A549 (cell line): ENCODE measurements at regions of chr1 and their contacts with region 1.

Region 1: DNA sequence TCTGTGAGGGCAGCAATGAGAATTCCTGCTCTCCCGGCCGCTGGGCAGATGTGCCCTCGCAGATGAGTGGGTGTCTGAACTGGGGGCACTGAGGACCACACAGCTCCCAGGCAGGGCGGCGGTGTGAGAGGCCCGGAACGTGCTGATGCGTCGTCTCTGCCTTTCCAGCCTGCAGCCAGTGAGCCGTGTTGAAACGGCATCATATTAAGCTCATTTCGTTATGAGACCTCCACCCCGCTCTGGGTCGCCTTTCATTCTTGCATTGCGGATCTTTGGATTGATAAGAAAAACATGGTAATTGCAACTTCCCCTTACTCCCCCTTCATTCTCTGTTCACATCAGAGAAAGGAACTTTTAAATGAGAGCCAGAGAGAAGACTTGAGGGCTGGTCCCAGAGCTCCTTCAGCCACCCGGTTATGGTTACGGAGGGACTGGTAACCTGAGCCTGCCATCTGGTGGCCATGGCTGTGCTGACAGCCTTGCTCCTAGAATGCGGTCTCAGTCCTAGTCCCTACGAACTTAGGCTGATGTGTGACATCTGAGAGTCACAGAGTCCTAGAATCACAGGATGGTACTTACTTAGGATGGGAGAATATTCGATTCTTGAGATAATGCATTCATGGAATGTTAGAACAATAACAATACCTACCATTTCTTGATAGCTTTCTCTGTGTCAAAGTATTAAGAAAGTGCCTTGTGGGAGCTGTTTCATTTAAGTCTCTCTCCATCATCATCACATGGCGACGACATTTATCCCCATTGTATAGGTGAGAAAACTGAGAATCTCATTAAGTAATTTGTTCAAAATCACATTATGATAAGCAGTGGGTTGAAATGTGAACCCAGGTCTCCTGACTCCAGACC is 271.0 kb downstream of the TRABD2B start:
- DNase-seq: peak; percentile 74 to 82
- ATAC-seq: peak; percentile 91 to 94
- H3K4me3 ChIP-seq: no peak overlapping the region
- H3K27ac ChIP-seq: no peak overlapping the region
- H3K4me1 ChIP-seq: peaks cover 22% of the 10 kb centered on the region; the same call in 2 of the 3 replicates
- CTCF ChIP-seq: peak; percentile 76
- EP300 ChIP-seq: no peak
- POLR2A ChIP-seq: no peak
- RAD21 ChIP-seq: peak; percentile 76 to 81

Region 2: GRCh38 chr1:47388891-47389238 is 337.4 kb before region 1 on chr1:
- CTCF ChIA-PET with region 1: interaction called, 34 read pairs
- POLR2A ChIA-PET with region 1: no interaction called
- DNase-seq: peak; percentile 53 to 60
- ATAC-seq: peak; percentile 94 to 96
- H3K4me3 ChIP-seq: no peak overlapping the region
- H3K27ac ChIP-seq: no peak overlapping the region
- H3K4me1 ChIP-seq: no peaks in the 10 kb centered on the region
- CTCF ChIP-seq: peak; percentile 63
- EP300 ChIP-seq: no peak
- POLR2A ChIP-seq: no peak
- RAD21 ChIP-seq: peak; percentile 70 to 74

Region 3: GRCh38 chr1:47416319-47417169 is 309.7 kb before region 1 on chr1:
- CTCF ChIA-PET with region 1: interaction called, 10 read pairs
- POLR2A ChIA-PET with region 1: no interaction called
- DNase-seq: no peak
- ATAC-seq: peak; percentile 30 to 59; a peak in 3 of 6 replicates
- H3K4me3 ChIP-seq: peak overlapping the region; percentile 38
- H3K27ac ChIP-seq: peak overlapping the region in 1 of 2 experiments; percentile 62; a peak in 3 of 6 replicates
- H3K4me1 ChIP-seq: no peaks in the 10 kb centered on the region
- CTCF ChIP-seq: no peak
- EP300 ChIP-seq: no peak
- POLR2A ChIP-seq: no peak
- RAD21 ChIP-seq: no peak

Region 4: GRCh38 chr1:47424336-47424982 is 301.8 kb before region 1 on chr1:
- CTCF ChIA-PET with region 1: interaction called, 313 read pairs
- POLR2A ChIA-PET with region 1: no interaction called
- DNase-seq: peak; percentile 63 to 65
- ATAC-seq: peak; percentile 92 to 97
- H3K4me3 ChIP-seq: no peak overlapping the region
- H3K27ac ChIP-seq: no peak overlapping the region
- H3K4me1 ChIP-seq: no peaks in the 10 kb centered on the region
- CTCF ChIP-seq: peak; percentile 65
- EP300 ChIP-seq: no peak
- POLR2A ChIP-seq: no peak
- RAD21 ChIP-seq: peak; percentile 22 to 38; a peak in 3 of 5 replicates

Region 5: GRCh38 chr1:47624531-47624930 is 101.7 kb before region 1 on chr1:
- CTCF ChIA-PET with region 1: no interaction called
- POLR2A ChIA-PET with region 1: no interaction called
- DNase-seq: no peak
- ATAC-seq: no peak
- H3K4me3 ChIP-seq: no peak overlapping the region
- H3K27ac ChIP-seq: no peak overlapping the region
- H3K4me1 ChIP-seq: no peaks in the 10 kb centered on the region
- CTCF ChIP-seq: no peak
- EP300 ChIP-seq: no peak
- POLR2A ChIP-seq: no peak
- RAD21 ChIP-seq: no peak

Region 6: DNA sequence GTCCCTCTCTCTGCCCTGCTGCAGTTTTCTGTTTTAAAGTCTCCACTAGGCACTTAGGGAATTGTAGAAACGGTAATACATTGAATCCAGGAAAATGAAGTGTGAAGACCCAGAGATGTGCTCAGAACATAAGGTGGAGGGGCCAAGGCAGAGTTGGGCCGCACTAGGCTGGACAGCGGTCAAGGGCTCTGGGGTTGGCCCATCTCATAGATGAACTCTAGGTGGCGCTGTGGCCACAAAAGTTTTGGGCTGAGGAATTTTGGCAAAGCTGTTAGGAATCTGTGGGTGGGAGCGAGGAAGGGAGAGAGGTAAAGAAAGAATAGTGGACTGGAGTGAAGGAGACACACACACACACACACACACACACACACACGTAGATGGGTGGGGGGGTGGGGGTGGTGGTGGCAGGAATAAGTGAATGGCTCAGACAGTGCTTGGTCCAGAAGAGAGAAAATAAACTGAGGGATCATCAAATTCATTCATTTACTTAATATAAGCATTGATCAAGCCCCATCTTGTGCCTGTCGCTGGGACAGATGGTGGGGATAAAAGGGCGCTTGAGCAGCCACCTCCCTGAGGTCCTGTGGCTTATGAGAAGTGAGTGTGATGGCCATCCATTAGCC is 12.4 kb after region 1 on chr1:
- CTCF ChIA-PET with region 1: interaction called, 25 read pairs
- POLR2A ChIA-PET with region 1: no interaction called
- DNase-seq: peak; percentile 12 to 38
- ATAC-seq: peak; percentile 71 to 84
- H3K4me3 ChIP-seq: no peak overlapping the region
- H3K27ac ChIP-seq: no peak overlapping the region
- H3K4me1 ChIP-seq: no peaks in the 10 kb centered on the region
- CTCF ChIP-seq: peak; percentile 46
- EP300 ChIP-seq: no peak
- POLR2A ChIP-seq: no peak
- RAD21 ChIP-seq: peak; percentile 56 to 61